WTC11 (cell line): ENCODE measurements at regions of chr18 and their contacts with region 1.

Region 1: GRCh38 chr18:47545613-47546012 is 294.2 kb upstream of the SKOR2 start:
- DNase-seq: peak; percentile 25
- ATAC-seq: peak; percentile 98
- H3K4me3 Mint-ChIP-seq: no peak overlapping the region
- H3K27ac Mint-ChIP-seq: no peak overlapping the region
- H3K4me1 Mint-ChIP-seq: no peaks in the 10 kb centered on the region
- H3K27me3 Mint-ChIP-seq: peaks cover 4% of the 10 kb centered on the region; the same call in 1 of the 2 replicates
- CTCF ChIP-seq: no peak

Region 2: GRCh38 chr18:47560702-47561392 is 15.2 kb after region 1 on chr18:
- CTCF ChIA-PET with region 1: interaction called, 14 read pairs
- POLR2A ChIA-PET with region 1: no interaction called
- DNase-seq: peak; percentile 53
- ATAC-seq: peak; percentile 84
- H3K4me3 Mint-ChIP-seq: peak overlapping the region; percentile 35
- H3K27ac Mint-ChIP-seq: peak overlapping the region; percentile 91
- H3K4me1 Mint-ChIP-seq: peaks cover 55% of the 10 kb centered on the region
- H3K27me3 Mint-ChIP-seq: peaks cover 27% of the 10 kb centered on the region
- CTCF ChIP-seq: no peak

Region 3: DNA sequence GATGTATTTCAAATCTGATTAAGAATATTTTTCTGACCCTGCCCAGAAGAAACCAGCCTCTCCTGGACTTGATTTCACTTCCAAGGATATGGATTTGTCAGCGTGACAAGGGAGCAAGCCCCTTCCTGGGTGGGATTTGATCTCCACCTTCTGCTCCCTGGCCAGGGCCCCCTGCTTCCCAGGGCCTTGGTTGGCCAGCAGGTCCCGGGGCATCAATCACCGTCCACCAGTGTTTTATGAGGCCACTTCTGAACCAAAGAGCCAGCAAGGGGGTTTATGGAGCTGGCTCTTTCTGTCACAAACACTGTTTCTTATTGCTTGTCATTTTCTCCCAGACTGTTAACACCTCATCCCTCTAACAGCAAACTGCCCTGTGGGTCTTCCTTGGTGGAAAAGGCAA is 26.3 kb after region 1 on chr18:
- CTCF ChIA-PET with region 1: no interaction called
- POLR2A ChIA-PET with region 1: no interaction called
- DNase-seq: no peak
- ATAC-seq: no peak
- H3K4me3 Mint-ChIP-seq: no peak overlapping the region
- H3K27ac Mint-ChIP-seq: no peak overlapping the region
- H3K4me1 Mint-ChIP-seq: peaks cover 26% of the 10 kb centered on the region
- H3K27me3 Mint-ChIP-seq: peaks cover 4% of the 10 kb centered on the region; the same call in 1 of the 2 replicates
- CTCF ChIP-seq: no peak

Region 4: DNA sequence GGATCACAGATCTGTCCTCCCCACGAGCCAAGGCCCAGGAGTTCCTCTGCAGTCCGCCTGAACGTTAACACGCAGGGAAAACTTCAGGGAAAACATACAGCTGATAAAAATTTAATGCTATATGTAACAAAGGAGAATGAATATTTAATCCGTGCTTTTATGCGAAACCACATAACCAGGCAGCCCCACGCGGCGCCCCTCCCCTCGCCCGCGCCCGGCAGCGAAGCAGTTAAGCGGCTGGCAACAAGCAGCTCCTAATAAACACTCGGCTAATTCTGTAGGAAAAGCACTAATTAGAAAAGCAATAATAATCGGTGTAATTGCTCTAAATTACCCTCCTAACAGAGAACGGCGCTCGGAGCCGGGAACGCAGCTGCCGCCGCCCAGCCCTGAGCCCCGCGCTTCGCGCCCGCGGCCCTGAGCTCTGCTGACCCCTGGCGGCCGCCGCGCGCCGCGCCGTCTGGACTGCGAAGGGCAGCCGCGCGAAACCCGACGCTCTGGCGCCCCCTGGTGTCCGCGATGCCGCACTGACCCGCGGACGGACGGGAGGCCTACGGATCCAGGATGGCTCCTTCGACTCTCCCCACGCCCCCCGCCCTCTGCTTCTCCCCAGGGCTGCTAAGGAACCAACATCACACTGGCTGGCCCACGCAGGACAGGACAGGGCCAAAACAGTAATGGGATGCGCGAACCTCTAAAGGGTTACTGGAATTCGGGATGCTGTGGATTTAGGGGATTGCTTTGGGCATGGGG is 203.4 kb after region 1 on chr18:
- CTCF ChIA-PET with region 1: interaction called, 11 read pairs
- POLR2A ChIA-PET with region 1: interaction called, 3 read pairs
- DNase-seq: peak; percentile 83
- ATAC-seq: peak; percentile 81
- H3K4me3 Mint-ChIP-seq: peak overlapping the region; percentile 65
- H3K27ac Mint-ChIP-seq: no peak overlapping the region
- H3K4me1 Mint-ChIP-seq: peaks cover 9% of the 10 kb centered on the region; the same call in 1 of the 2 replicates
- H3K27me3 Mint-ChIP-seq: peaks cover 17% of the 10 kb centered on the region
- CTCF ChIP-seq: peak; percentile 100

Region 5: DNA sequence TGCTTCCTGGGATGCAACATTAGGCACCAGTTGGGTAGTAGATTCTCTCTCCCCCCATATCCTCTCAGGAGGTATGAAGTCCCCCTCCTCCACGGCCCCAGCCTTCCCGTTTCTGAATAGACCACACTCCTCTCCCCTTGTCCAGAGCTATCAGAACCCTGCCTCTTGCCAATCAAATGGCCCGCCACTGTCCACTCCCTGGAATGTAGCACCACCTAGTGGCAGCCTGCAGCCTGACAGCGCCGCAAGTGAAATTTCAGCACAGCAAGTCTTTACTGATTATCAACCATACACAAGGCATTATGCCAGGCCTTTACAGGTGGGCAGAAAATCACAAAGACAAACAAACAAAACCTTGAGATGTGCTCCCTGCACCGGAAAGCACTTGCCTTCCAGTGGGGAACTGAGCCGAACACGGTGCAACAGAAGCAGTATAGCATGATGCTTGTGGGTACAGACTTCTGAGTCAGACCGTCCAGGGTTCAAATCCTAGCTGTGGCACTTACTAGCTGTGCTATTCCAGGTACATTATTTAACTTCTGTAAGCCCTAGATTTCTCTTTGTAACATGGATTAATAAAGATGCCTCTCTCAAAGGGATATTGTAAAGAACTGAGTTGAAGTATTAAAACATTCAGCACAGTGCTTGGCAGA is 210.9 kb after region 1 on chr18:
- CTCF ChIA-PET with region 1: interaction called, 10 read pairs
- POLR2A ChIA-PET with region 1: interaction called, 3 read pairs
- DNase-seq: peak; percentile 83
- ATAC-seq: peak; percentile 67
- H3K4me3 Mint-ChIP-seq: no peak overlapping the region
- H3K27ac Mint-ChIP-seq: no peak overlapping the region
- H3K4me1 Mint-ChIP-seq: peaks cover 9% of the 10 kb centered on the region; the same call in 1 of the 2 replicates
- H3K27me3 Mint-ChIP-seq: no peaks in the 10 kb centered on the region; the same call in 1 of the 2 replicates
- CTCF ChIP-seq: peak; percentile 90